ENCODE measurements at regions of chr1 and their contacts with region 1.

Region 1: DNA sequence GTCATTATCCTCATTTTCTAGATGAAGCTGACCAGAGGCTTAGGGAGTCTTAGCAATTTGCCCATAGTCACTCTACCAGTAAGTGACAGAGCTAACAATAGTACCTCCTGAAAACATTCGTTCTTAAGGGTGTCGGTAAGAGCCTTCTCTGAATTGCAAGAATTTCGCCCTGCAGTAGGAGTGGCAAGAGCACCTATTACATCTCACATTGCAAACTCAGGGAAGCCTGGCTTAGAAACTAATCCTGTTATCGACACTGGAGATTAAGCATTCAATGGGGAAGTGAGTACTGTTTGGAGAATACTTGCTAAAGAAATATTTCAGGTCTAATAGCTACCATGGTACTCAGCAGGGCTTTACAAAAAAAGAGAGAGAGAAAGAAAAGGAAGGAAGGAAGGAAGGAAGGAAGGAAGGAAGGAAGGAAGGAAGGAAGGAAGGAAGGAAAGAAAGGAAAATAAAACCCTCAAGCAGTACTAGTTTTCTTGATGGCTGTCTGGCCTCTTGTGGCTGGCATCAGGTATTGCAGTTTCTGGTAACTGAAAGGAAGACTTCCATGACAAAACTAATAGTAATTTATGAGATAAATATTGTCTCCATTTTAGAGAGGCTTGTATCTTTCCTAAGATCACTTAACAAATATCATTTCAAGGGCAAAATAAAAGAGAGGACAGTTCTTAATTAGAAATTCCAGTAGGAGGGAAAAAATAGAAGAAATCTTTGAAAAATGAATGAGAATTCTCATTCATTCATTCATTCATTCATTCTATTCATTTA is 10.4 kb downstream of the C1orf226 start:
- DNase-seq: peak; percentile 63 to 83 (median 64)
- ATAC-seq: peak; percentile 50
- H3K4me3 ChIP-seq: no peak overlapping the region
- H3K27ac ChIP-seq: peak overlapping the region; percentile 78
- H3K4me1 ChIP-seq: peaks cover 44 to 56% of the 10 kb centered on the region in 2 experiments
- H3K27me3 ChIP-seq: no peaks in the 10 kb centered on the region
- CTCF ChIP-seq: peak; percentile 69 to 88 (median 84)
- EP300 ChIP-seq: 0 out of 2 replicates have a peak, but pooled peaks have one; percentile 18
- POLR2A ChIP-seq: no peak
- RAD21 ChIP-seq: peak; percentile 89 to 98

Region 2: GRCh38 chr1:162056043-162056442 is 335.9 kb before region 1 on chr1:
- CTCF ChIA-PET with region 1: interaction called, 4 read pairs
- POLR2A ChIA-PET with region 1: no interaction called
- in situ Hi-C with region 1: no loop called
- intact Hi-C with region 1: loop called (anchors 1 kb)
- DNase-seq: peak; percentile 62 to 70 (median 65)
- ATAC-seq: peak; percentile 99
- H3K4me3 ChIP-seq: no peak overlapping the region
- H3K27ac ChIP-seq: no peak overlapping the region
- H3K4me1 ChIP-seq: no peaks in the 10 kb centered on the region
- H3K27me3 ChIP-seq: peaks cover 0 to 7% of the 10 kb centered on the region in 2 experiments; a peak in 1 of 5 replicates
- CTCF ChIP-seq: peak; percentile 88 to 93 (median 88)
- EP300 ChIP-seq: no peak
- POLR2A ChIP-seq: no peak
- RAD21 ChIP-seq: peak; percentile 91 to 94

Region 3: DNA sequence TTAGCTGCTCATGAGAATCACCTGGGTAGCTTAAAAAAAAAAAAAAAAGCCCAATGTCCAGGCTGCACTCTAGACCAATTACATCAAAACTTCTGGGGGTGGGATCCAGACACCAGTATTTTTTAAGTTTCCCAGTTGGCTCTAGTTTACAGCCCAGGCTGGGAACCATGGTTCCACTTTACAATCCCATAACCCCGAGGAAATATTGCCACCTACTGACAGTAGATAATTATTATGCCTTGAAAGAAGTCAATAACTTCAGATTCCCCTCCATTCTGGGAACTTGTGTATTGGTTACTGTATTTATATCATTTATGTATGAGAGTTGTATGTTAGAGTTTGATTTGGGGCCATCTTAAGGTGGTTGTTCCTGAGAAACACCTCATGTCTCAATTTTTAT is 115.5 kb before region 1 on chr1:
- CTCF ChIA-PET with region 1: interaction called, 4 read pairs
- POLR2A ChIA-PET with region 1: no interaction called
- in situ Hi-C with region 1: no loop called
- intact Hi-C with region 1: loop called (anchors 5 kb)
- DNase-seq: peak in 2 of 4 experiments; percentile 34 to 43
- ATAC-seq: peak; percentile 72
- H3K4me3 ChIP-seq: no peak overlapping the region
- H3K27ac ChIP-seq: no peak overlapping the region
- H3K4me1 ChIP-seq: peaks cover 3 to 23% of the 10 kb centered on the region in 2 experiments; a peak in 4 of 5 replicates
- H3K27me3 ChIP-seq: no peaks in the 10 kb centered on the region
- CTCF ChIP-seq: peak; percentile 41 to 70 (median 44); a peak in 5 of 6 replicates
- EP300 ChIP-seq: no peak
- POLR2A ChIP-seq: no peak
- RAD21 ChIP-seq: peak; percentile 75 to 77

Region 4: GRCh38 chr1:162357681-162358266 is 34.2 kb before region 1 on chr1:
- CTCF ChIA-PET with region 1: interaction called, 19 read pairs
- POLR2A ChIA-PET with region 1: no interaction called
- in situ Hi-C with region 1: no loop called
- intact Hi-C with region 1: loop called (anchors 1 kb)
- DNase-seq: peak; percentile 65 to 84 (median 72)
- ATAC-seq: peak; percentile 87
- H3K4me3 ChIP-seq: no peak overlapping the region
- H3K27ac ChIP-seq: no peak overlapping the region; the same call in 1 of the 3 replicates
- H3K4me1 ChIP-seq: peaks cover 9 to 33% of the 10 kb centered on the region in 2 experiments; a peak in 4 of 5 replicates
- H3K27me3 ChIP-seq: no peaks in the 10 kb centered on the region
- CTCF ChIP-seq: peak; percentile 74 to 89 (median 76)
- EP300 ChIP-seq: no peak
- POLR2A ChIP-seq: no peak
- RAD21 ChIP-seq: peak; percentile 74 to 88

Region 5: GRCh38 chr1:162373541-162374375 is 18.2 kb before region 1 on chr1:
- CTCF ChIA-PET with region 1: no interaction called
- POLR2A ChIA-PET with region 1: no interaction called
- in situ Hi-C with region 1: no loop called
- intact Hi-C with region 1: loop called (anchors 2 kb)
- DNase-seq: peak in 3 of 4 experiments; percentile 54 to 55 (median 55)
- ATAC-seq: peak; percentile 15; the same call in 1 of the 3 replicates
- H3K4me3 ChIP-seq: no peak overlapping the region
- H3K27ac ChIP-seq: no peak overlapping the region
- H3K4me1 ChIP-seq: peaks cover 18 to 44% of the 10 kb centered on the region in 2 experiments
- H3K27me3 ChIP-seq: no peaks in the 10 kb centered on the region
- CTCF ChIP-seq: no peak
- EP300 ChIP-seq: no peak
- POLR2A ChIP-seq: no peak
- RAD21 ChIP-seq: no peak

Region 6: DNA sequence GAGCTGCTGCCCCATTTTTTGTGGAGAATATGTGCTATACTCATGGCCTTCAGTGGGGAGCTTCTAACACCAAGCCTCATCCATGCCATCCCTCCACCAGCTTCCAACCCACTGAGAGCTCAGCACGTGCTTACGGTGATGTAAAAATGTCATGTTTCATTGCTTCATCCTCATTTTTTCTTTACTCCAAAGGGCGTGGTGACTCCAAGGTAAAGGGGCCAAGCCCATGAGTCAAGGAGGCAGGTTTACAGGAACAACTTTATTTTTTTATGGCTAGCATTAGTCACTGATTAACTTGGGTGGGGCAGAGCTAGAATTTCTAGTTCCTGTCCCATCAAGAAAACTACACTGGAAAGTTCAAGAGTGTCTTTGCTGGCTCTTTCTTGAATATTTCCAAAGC is 10.6 kb before region 1 on chr1 and contains the start of gene C1orf226:
- CTCF ChIA-PET with region 1: no interaction called
- POLR2A ChIA-PET with region 1: interaction called, 10 read pairs
- in situ Hi-C with region 1: no loop called
- intact Hi-C with region 1: no loop called
- DNase-seq: peak in 1 of 4 experiments; percentile 16
- ATAC-seq: no peak
- H3K4me3 ChIP-seq: no peak within 1 kb of the TSS
- H3K27ac ChIP-seq: peak within 1 kb of the TSS; percentile 43
- H3K4me1 ChIP-seq: peaks cover 48 to 72% of the 10 kb centered on the region in 2 experiments; a peak in 4 of 5 replicates
- H3K27me3 ChIP-seq: no peaks in the 10 kb centered on the region
- CTCF ChIP-seq: no peak
- EP300 ChIP-seq: no peak
- POLR2A ChIP-seq: no peak
- RAD21 ChIP-seq: no peak
- polyA plus RNA-seq, gene C1orf226: 0.10 to 0.20 TPM